ENCODE measurements at regions of chr14 and their contacts with region 1.

Region 1: DNA sequence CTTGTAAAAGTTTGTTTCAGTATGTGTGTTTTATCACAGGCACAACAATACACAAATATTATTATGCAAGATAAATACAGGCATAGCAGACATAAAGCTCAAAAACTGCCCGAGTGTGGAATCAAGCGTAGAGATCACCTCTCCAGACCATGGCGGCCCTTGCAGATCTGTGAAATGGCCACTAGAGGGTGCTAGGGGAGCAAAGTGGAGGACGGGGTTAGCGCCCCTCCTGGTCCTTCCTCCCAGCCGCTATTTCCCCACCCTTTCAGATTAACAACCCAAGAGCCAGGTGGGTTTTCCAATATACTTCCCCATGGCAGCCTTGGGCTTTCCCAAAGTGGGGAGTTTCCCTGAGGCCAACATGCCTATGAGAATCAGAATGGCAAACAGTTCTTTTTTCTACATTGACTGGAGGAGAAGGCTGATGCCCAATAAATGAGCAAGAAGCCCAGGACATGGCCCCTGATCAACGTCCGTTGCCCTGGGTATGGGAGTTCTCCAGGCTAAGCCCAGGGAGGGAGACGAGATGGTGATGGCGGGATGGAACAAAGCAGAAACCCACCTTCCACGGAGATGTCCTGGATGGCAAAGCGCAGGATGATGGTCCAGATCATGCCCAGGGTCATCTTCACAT is 67.4 kb downstream of the ACTN1 start:
- DNase-seq: peak; percentile 73
- H3K4me3 Mint-ChIP-seq: no peak overlapping the region
- H3K27ac Mint-ChIP-seq: no peak overlapping the region
- H3K4me1 Mint-ChIP-seq: peaks cover 1% of the 10 kb centered on the region
- H3K27me3 Mint-ChIP-seq: no peaks in the 10 kb centered on the region

Region 2: GRCh38 chr14:68862954-68863594 is 48.6 kb before region 1 on chr14:
- CTCF ChIA-PET with region 1: interaction called, 13 read pairs
- POLR2A ChIA-PET with region 1: no interaction called
- DNase-seq: peak; percentile 74
- H3K4me3 Mint-ChIP-seq: no peak overlapping the region
- H3K27ac Mint-ChIP-seq: no peak overlapping the region
- H3K4me1 Mint-ChIP-seq: no peaks in the 10 kb centered on the region
- H3K27me3 Mint-ChIP-seq: no peaks in the 10 kb centered on the region

Region 3: DNA sequence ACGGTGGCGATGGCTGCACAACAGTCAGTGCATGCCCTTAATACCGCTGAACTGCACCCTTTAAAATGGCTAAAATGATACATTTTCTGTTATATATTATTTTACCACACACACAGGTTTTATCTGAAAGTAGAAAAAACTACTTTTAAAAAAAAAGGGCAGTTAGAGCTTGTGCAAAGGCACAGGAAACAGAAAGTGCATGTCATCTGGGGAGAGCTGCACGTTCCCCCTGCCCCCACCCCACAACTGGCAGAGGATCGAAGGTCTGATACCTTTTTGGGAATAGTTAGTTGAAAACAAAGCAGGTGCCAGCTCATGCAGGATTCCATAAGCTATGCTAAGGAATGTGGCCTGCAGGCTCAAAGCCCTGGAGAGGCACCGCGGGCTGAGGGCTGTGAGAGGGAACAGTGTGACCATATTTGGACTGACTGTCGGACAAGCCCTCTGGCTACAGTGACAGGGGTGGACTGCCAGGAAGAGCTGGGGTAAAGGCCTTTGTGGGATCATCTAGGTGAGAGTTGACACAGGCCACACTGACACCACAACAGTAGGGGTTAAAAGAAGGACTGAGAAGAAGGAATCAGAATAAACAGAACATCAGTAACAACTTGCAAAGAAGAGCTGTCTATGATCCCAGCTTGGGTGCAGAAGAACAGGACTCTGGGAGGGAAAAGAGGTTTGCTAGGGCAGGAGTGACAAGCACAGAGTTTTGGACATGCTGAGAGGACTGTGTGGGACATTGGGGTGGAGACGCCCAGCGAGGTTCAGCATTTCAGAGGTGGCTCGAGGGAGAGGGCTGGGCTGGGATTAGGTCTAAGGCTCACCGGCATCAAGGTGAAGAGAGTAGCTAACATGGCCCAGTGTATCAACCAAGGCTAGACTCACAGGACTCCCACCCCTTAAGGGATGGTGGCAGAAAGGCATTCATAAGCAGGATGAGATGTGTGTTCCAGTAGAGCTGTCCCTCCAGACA is 12.8 kb after region 1 on chr14:
- CTCF ChIA-PET with region 1: interaction called, 21 read pairs
- POLR2A ChIA-PET with region 1: no interaction called
- DNase-seq: no peak
- H3K4me3 Mint-ChIP-seq: no peak overlapping the region
- H3K27ac Mint-ChIP-seq: no peak overlapping the region
- H3K4me1 Mint-ChIP-seq: peaks cover 13% of the 10 kb centered on the region
- H3K27me3 Mint-ChIP-seq: no peaks in the 10 kb centered on the region

Region 4: GRCh38 chr14:69090187-69090789 is 178.6 kb after region 1 on chr14:
- CTCF ChIA-PET with region 1: interaction called, 54 read pairs
- POLR2A ChIA-PET with region 1: no interaction called
- DNase-seq: peak; percentile 33
- H3K4me3 Mint-ChIP-seq: no peak overlapping the region
- H3K27ac Mint-ChIP-seq: no peak overlapping the region
- H3K4me1 Mint-ChIP-seq: peaks cover 7% of the 10 kb centered on the region
- H3K27me3 Mint-ChIP-seq: no peaks in the 10 kb centered on the region

Region 5: GRCh38 chr14:69101331-69101826 is 189.7 kb after region 1 on chr14:
- CTCF ChIA-PET with region 1: interaction called, 58 read pairs
- POLR2A ChIA-PET with region 1: no interaction called
- DNase-seq: no peak
- H3K4me3 Mint-ChIP-seq: no peak overlapping the region
- H3K27ac Mint-ChIP-seq: peak overlapping the region; percentile 0
- H3K4me1 Mint-ChIP-seq: peaks cover 13% of the 10 kb centered on the region
- H3K27me3 Mint-ChIP-seq: no peaks in the 10 kb centered on the region

Region 6: DNA sequence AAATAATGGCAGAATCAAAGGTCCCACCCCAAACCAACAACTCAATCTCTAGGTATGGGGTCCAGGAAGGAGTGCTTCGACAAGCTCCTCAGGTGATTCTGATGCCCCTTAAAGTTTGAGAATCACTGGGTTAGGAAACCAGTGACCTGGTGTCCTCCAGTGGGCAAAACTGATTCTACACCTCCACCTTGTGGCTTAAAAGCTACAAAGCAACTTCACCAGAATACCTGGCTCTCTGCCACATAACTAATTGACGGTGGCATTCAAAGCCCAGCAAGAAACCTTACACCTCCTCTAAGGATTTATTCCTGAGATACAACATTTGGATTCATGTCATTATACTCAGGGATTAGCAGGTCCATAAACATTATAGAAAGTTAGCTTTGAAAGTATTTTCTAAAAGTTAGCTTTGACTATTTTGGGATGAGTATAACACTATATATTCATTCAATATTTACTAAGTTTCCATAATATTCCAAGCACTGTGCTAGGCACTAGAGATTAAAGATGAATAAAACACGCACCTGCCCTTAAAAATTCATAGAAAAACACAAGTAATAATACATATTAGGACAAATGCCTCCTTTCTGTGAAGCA is 195.8 kb after region 1 on chr14:
- CTCF ChIA-PET with region 1: interaction called, 58 read pairs
- POLR2A ChIA-PET with region 1: interaction called, 5 read pairs
- DNase-seq: peak; percentile 24
- H3K4me3 Mint-ChIP-seq: no peak overlapping the region
- H3K27ac Mint-ChIP-seq: no peak overlapping the region
- H3K4me1 Mint-ChIP-seq: peaks cover under 1% of the 10 kb centered on the region
- H3K27me3 Mint-ChIP-seq: no peaks in the 10 kb centered on the region